Dorsolateral prefrontal cortex (tissue), 120 donors: ENCODE measurements at regions of chr22 and their contacts with region 1.

Region 1: DNA sequence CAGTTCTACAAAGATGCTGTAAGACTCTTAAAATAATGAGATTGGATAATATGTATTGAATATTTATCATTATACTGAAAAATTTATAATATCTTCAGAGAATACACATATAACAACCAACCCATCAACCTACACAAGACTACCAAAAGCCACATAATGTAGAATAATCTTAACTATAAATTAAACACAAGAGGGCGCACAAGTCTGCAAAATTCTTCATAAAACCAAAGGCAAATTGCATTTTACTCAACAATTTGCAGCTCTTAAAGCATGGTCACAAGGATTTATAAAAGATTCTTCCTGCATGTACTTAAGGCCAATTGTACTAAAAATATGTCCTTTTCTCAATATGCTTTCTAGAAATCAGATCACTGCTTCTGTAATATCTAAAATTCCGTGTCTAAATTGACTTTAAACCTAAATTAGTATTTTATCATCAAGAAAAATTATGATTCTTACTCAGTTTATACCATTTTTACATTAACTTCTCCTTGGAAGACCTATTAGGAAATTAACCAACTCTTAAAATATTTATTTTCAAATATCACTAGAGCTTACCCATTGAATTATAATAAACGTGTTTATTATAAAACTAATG is 79.0 kb downstream of the TTC28 start:
- DNase-seq: no peak
- H3K4me3 ChIP-seq: no peak overlapping the region
- H3K27ac ChIP-seq: no peak overlapping the region
- H3K27me3 ChIP-seq: no peaks in the 10 kb centered on the region
- CTCF ChIP-seq: peak; percentile 59 to 96 (median 74)

Region 2: DNA sequence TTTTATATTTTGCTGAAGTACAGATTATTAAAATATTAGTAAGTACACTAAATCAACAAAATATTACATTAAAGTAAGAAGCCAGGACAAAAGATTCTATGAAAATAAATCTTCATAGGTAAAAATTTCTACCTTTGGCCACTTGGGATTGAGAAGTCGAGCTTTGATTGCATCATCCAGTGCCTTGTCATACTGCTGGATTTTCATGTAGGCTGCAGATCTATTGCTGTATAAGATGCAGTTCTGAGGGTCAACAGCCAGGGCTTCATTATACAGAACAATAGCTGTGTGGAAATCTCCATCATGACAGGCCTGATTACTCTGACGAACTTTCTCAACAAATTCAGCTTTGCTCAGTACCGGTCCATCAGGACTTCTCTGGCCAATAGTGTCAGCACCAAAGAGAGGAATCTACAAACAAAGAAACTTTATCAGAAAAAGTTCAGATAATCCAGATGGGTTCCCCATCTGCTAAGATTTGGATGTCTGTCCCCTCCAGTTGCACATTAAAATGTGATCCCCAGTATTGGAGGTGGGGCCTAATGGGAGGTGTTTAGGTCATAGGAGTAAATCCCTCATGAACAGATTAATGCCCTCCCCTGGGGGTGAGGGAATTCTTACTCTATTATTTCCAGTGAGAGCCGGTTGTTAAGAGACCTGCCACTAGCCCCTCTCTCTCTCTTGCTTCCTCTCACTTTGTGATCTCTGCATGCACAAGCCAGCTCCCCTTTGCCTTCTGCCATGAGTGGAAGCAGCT is 29.0 kb after region 1 on chr22:
- intact Hi-C with region 1: no loop called
- DNase-seq: no peak
- H3K4me3 ChIP-seq: no peak overlapping the region
- H3K27ac ChIP-seq: no peak overlapping the region
- H3K27me3 ChIP-seq: no peaks in the 10 kb centered on the region
- CTCF ChIP-seq: no peak

Region 3: DNA sequence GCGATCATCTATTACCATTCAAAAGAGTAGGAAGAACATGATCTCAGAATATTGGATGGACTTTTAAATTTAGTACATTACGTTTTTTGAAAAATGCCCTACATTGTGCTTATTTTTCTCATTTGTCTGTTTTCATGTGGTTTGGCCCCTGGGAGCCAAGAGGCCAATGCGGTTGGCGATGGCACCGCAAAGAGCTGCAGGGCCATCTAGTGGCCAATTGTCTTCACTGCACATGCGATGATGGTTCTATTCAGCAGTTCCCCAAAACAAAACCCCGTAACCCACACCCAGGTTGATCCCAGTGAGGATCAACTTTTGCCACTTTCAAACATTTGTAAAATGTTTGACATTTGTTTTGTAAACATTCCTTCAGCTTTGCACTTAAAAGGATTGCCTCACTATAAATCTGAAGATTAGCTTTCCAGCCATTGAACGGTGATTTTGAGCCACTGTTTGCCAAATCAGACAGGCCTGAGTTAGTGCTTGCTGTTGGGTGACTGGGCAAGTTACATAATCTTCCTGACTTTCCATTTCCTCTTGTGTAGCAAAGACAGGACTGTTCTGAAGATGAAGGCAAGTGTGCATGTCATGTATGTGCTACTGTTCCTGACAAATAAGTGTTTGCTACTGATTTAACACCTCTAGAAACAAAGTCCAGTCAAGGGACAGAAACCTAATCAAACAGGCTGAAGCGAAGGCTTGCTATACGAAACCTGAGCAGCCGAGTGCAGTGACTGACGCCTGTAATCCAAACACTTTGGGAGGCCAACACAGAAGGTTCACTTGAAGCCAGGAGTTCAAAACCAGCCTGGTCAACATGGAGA is 228.9 kb after region 1 on chr22:
- intact Hi-C with region 1: loop called (anchors 2 to 5 kb)
- DNase-seq: peak; percentile 49 to 83 (median 66)
- H3K4me3 ChIP-seq: peak overlapping the region in 3 of 59 donors; percentile 2 to 19 (median 9)
- H3K27ac ChIP-seq: peak overlapping the region in 1 of 59 donors; percentile 16
- H3K27me3 ChIP-seq: no peaks in the 10 kb centered on the region
- CTCF ChIP-seq: peak; percentile 71 to 100 (median 97)